ENCODE measurements at regions of chr19 and their contacts with region 1.

Region 1: DNA sequence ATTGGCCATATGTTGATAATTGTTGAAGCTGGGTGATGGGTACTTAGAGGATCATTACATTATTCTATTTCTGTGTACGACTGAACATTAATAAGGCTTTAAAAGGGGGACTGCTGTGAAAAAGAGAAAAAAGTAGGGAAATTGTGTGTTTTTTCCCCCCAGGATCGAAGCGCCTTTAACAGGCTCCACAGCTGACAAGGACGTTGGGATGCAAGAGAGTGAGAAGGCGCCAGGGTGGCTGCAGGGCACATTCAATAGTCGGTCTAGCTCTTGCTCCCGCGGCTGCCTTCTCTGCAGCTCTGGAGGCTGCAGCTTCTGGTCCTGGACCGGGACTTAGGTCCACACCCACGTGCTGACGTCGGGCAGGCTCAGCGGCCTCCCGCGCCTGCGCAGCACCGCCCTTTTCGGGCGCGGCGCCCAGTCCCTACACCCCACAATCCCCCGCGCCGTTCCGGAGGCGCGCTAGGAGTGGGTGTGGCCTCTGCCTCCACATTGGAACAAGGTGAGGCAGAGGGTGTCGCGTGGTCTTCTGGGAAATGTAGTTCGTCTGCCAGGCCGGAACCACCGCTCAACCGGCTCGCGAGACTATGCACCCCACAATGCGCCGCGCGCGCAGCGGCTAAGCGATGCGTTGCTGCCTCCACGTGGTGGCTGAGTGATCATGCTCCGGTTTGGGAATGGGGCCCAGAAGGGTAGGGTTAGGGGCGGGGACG is 4.9 kb upstream of the LRFN3 start:
- DNase-seq: peak; percentile 99
- ATAC-seq: peak; percentile 99 to 100 (median 100)
- H3K4me3 ChIP-seq: peak overlapping the region in 7 of 10 donors; percentile 20 to 43 (median 34)
- H3K27ac ChIP-seq: peak overlapping the region in 9 of 10 donors; percentile 48 to 88 (median 68)
- H3K4me1 ChIP-seq: peaks cover 3 to 42% (median 14%) of the 10 kb centered on the region in 9 donors
- H3K27me3 ChIP-seq: peaks cover 0 to 9% (median 0%) of the 10 kb centered on the region in 7 donors
- CTCF ChIP-seq: peak; percentile 61 to 96 (median 88)

Region 2: GRCh38 chr19:34298891-34299520 is 1632.3 kb before region 1 on chr19:
- intact Hi-C with region 1: loop called in 1 of 10 experiments (anchors 5 kb)
- DNase-seq: no peak
- ATAC-seq: peak in 1 of 8 donors; percentile 29
- H3K4me3 ChIP-seq: no peak overlapping the region
- H3K27ac ChIP-seq: peak overlapping the region in 2 of 10 donors; percentile 8 to 9
- H3K4me1 ChIP-seq: peaks cover 0 to 16% (median 0%) of the 10 kb centered on the region in 9 donors
- H3K27me3 ChIP-seq: no peaks in the 10 kb centered on the region
- CTCF ChIP-seq: no peak

Region 3: GRCh38 chr19:35693830-35694599 is 237.3 kb before region 1 on chr19:
- intact Hi-C with region 1: loop called in 5 of 10 experiments (anchors 2 to 5 kb)
- DNase-seq: peak; percentile 81 to 88
- ATAC-seq: peak; percentile 97 to 100 (median 98)
- H3K4me3 ChIP-seq: no peak overlapping the region
- H3K27ac ChIP-seq: peak overlapping the region in 1 of 10 donors; percentile 41
- H3K4me1 ChIP-seq: peaks cover 0 to 4% (median 0%) of the 10 kb centered on the region in 9 donors
- H3K27me3 ChIP-seq: peaks cover 0 to 6% (median 0%) of the 10 kb centered on the region in 7 donors
- CTCF ChIP-seq: peak; percentile 93 to 99 (median 96)

Region 4: DNA sequence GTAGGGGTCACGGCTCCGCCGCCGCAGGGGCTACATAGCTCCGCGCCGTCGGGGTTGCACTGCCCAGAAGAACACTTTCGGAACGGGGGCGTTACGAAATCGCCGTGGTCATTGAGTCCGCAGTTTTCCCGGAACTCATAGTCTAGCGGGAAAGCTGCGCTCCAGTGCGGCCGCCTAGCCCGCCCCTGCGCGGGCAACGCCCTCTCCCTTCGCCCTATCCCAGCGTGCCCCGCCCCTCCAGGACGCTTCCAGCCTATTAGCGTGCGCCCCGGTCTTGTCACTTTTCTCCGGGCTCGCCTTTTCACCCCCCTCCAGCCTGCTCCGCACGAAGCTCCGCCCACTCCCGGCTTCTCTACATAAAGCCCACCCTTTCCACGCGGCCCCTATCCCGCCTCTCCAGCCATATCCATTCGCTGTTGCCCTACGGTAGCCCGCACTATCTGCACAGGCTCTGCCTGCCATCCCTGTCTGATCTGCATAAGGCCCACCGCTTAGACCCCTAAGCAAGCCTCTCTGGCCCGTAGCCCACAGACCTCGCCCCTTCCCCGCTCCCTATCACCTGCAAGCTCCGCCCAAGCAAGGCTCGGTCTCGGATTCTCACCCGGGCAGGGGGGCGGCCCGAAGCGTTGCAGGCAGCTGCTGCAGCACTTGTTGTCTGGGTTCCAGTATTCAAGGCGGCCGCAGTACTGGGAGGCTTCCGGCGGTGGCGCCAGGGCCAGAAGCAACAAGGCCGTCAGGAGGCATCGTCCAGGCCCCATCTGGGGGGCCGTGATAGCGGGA is 190.7 kb before region 1 on chr19:
- intact Hi-C with region 1: loop called in 4 of 10 experiments (anchors 5 to 10 kb)
- DNase-seq: peak; percentile 98
- ATAC-seq: peak; percentile 84 to 88 (median 86)
- H3K4me3 ChIP-seq: peak overlapping the region; percentile 51 to 81 (median 68)
- H3K27ac ChIP-seq: peak overlapping the region; percentile 38 to 95 (median 77)
- H3K4me1 ChIP-seq: peaks cover 0 to 49% (median 28%) of the 10 kb centered on the region in 9 donors
- H3K27me3 ChIP-seq: no peaks in the 10 kb centered on the region
- CTCF ChIP-seq: peak in 2 of 9 donors; percentile 21 to 22

Region 5: DNA sequence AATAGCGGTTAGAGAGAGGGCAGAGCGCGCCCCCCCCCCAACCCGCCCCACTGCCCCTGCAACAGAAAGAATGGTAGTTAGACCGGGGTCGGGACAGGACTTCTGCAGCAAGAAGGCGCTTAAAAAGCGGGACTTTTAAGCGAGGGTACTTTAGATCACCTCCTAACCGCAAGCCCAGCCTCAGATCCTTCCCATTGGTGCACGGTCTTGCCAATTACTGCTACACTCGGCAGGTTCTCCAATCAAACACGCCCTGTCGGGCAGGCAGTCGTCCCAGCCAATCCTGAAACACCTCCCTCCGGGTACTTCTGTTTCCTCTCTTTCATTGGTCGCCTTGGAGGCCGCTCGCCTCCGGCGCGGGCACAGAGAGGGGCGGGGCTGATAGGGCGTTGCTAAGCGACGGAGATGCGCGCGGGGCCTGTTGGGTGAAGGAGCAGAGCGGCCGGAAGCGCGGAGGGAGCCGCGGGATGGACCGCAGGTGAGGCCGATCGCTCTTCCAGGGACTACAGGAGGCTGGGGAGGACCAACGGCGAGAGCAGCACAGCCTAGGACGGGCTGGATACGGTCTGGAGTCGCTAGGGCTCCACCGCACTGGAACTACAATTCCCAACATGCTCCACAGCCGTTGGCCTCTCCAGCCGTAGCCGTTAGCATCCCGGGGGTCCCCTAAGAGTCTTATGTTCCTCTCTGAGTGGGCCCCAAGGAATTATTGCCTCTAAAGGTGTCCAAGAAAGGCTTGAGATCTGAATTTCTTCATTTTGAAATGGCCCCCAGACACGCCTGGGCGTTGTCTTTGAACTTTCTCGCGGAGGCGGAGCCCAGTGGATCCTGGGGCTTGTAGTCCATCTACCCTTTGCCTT is 173.3 kb before region 1 on chr19 and contains the start of gene PROSER3:
- intact Hi-C with region 1: loop called in 1 of 10 experiments (anchors 5 kb)
- DNase-seq: peak; percentile 98 to 99
- ATAC-seq: peak; percentile 69 to 91 (median 86)
- H3K4me3 ChIP-seq: peak within 1 kb of the TSS; percentile 53 to 99 (median 82)
- H3K27ac ChIP-seq: peak within 1 kb of the TSS; percentile 88 to 99 (median 98)
- H3K4me1 ChIP-seq: peaks cover 4 to 54% (median 37%) of the 10 kb centered on the region in 9 donors
- H3K27me3 ChIP-seq: peaks cover 0 to 15% (median 0%) of the 10 kb centered on the region in 7 donors
- CTCF ChIP-seq: no peak
- total RNA-seq, gene PROSER3: 7.0 to 14.7 (median 9.7) TPM

Region 6: DNA sequence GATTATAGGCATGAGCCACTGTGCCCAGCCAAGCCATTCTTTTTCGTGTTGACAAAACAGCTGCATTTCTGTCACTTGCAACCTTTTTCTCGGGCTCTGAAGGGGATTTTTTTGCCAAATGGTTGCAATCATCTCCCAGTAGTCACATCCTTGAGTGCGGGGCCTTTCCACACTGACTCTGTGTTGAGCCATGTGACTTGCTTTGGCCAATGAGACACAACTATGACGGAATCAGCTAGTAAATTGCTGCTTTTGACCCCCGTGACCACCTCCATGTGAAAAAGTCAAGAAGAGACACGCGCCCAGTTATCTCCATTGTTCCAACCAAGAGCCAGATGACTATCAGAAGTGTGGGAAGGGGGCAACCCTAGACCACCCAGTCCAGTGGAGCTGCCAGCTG is 97.3 kb before region 1 on chr19:
- intact Hi-C with region 1: no loop called
- DNase-seq: no peak
- ATAC-seq: no peak
- H3K4me3 ChIP-seq: no peak overlapping the region
- H3K27ac ChIP-seq: no peak overlapping the region
- H3K4me1 ChIP-seq: no peaks in the 10 kb centered on the region
- H3K27me3 ChIP-seq: peaks cover 0 to 48% (median 24%) of the 10 kb centered on the region in 7 donors
- CTCF ChIP-seq: no peak

Region 7: GRCh38 chr19:35882114-35882832 is 49.0 kb before region 1 on chr19:
- intact Hi-C with region 1: loop called (anchors 1 to 5 kb)
- DNase-seq: peak in 1 of 2 donors; percentile 67
- ATAC-seq: peak in 1 of 8 donors; percentile 40
- H3K4me3 ChIP-seq: no peak overlapping the region
- H3K27ac ChIP-seq: no peak overlapping the region
- H3K4me1 ChIP-seq: peaks cover 0 to 9% (median 5%) of the 10 kb centered on the region in 9 donors
- H3K27me3 ChIP-seq: peaks cover 0 to 11% (median 0%) of the 10 kb centered on the region in 7 donors
- CTCF ChIP-seq: peak in 8 of 9 donors; percentile 36 to 76 (median 64)

Region 8: DNA sequence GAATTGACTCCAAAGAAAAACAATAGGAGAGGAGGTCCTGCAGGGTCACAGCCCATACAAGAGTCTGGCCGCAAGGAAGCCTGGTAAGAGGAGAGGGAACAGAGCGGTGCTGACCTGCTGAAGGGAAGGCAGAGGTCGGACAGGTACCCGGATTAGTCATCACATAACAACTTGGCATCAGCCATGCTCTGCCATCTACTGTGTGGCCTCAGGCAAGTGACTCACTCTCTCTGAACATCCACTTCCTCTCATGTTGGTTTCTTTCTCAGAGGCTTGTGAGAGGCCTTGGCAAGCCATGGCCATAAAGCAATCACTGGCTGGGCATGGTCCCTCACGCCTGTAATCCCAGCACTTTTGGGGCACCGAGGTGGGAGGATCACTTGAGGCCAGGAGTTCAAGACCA is 201.2 kb after region 1 on chr19:
- intact Hi-C with region 1: loop called in 1 of 10 experiments (anchors 10 kb)
- DNase-seq: no peak
- ATAC-seq: no peak
- H3K4me3 ChIP-seq: no peak overlapping the region
- H3K27ac ChIP-seq: peak overlapping the region in 1 of 10 donors; percentile 59
- H3K4me1 ChIP-seq: peaks cover 0 to 52% (median 19%) of the 10 kb centered on the region in 9 donors
- H3K27me3 ChIP-seq: no peaks in the 10 kb centered on the region
- CTCF ChIP-seq: no peak

Measured in heart right ventricle (tissue), 16 donors.